Heart right ventricle (tissue), 16 donors: ENCODE measurements at regions of chr5 and their contacts with region 1.

Region 1: GRCh38 chr5:176573564-176574296 is 24.6 kb downstream of the CDHR2 start:
- DNase-seq: peak; percentile 62 to 78
- ATAC-seq: peak; percentile 76 to 91 (median 90)
- H3K4me3 ChIP-seq: no peak overlapping the region
- H3K27ac ChIP-seq: no peak overlapping the region
- H3K4me1 ChIP-seq: peaks cover 0 to 3% (median 0%) of the 10 kb centered on the region in 9 donors
- H3K27me3 ChIP-seq: peaks cover 0 to 33% (median 5%) of the 10 kb centered on the region in 7 donors
- CTCF ChIP-seq: peak; percentile 63 to 88 (median 82)

Region 2: GRCh38 chr5:176388444-176389134 is 185.1 kb before region 1 on chr5 and contains the starts of genes HIGD2A and NOP16:
- intact Hi-C with region 1: no loop called
- DNase-seq: peak; percentile 99 to 100
- ATAC-seq: peak; percentile 94 to 98 (median 96)
- H3K4me3 ChIP-seq: peak within 1 kb of the TSS; percentile 52 to 99 (median 78)
- H3K27ac ChIP-seq: peak within 1 kb of the TSS; percentile 91 to 99 (median 95)
- H3K4me1 ChIP-seq: peaks cover 6 to 39% (median 27%) of the 10 kb centered on the region in 9 donors
- H3K27me3 ChIP-seq: no peaks in the 10 kb centered on the region
- CTCF ChIP-seq: no peak
- total RNA-seq, gene HIGD2A: 198 to 276 (median 228) TPM
- total RNA-seq, gene NOP16: 11.3 to 25.9 (median 18.5) TPM

Region 3: DNA sequence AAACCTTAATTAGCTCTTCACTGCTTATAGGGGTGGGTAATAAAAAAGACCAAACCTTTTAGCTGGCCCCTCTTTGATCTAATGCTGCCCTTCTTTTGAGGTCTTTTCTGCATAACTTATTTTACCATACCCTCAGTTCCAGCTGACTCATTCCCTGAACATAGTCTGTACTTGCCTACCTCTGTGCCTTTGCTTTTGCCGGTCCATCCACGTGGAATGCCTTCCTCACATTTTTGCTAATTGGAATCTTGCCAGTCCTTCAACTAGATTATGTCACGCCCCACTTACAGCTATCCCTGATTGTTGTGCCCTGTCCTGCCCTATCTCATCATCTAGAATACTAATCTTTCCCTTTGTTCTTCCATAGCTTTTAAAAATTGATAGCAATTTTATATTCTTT is 81.3 kb before region 1 on chr5:
- intact Hi-C with region 1: no loop called
- DNase-seq: no peak
- ATAC-seq: no peak
- H3K4me3 ChIP-seq: no peak overlapping the region
- H3K27ac ChIP-seq: no peak overlapping the region
- H3K4me1 ChIP-seq: peaks cover 0 to 5% (median 0%) of the 10 kb centered on the region in 9 donors
- H3K27me3 ChIP-seq: no peaks in the 10 kb centered on the region
- CTCF ChIP-seq: no peak

Region 4: DNA sequence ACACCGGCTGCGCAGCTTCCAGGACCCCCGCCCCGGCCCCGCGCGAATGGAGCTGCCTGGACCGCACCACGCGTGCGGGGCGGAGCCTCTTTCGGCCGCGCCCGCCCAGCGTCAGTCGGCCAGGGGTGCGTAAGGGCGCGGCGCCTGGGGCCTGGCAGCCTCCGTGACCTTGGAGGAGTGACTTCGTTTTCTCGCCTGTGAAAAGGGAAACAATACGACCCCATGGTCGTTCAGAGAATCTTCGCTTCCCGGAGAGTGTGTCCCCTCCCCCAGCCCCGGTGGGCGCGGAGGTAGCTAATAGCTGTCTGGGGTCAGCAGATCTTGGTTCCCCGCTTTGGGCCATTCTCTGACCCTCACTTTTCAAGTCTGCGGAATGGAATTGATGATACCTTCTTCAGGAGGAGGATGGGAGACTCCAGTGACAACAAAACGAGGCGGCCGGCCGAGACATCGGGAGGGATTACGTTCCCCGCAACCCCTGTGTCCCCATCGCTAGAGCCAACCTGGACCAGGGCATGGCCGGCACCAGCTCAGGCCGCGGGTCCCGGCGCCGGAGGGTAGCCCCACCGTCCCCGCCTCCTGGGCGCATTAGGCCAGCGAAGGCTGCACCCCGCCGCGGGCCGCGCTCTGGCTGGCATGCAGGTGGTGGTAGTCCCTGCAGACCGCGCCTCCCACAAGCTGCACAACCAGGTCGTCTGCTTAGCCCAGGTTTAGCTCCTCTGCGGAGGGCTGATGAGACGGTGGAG is 30.1 kb before region 1 on chr5:
- intact Hi-C with region 1: no loop called
- DNase-seq: peak; percentile 71 to 82
- ATAC-seq: peak; percentile 83 to 94 (median 89)
- H3K4me3 ChIP-seq: peak overlapping the region; percentile 55 to 85 (median 71)
- H3K27ac ChIP-seq: peak overlapping the region; percentile 73 to 94 (median 90)
- H3K4me1 ChIP-seq: peaks cover 0 to 55% (median 30%) of the 10 kb centered on the region in 9 donors
- H3K27me3 ChIP-seq: no peaks in the 10 kb centered on the region
- CTCF ChIP-seq: no peak

Region 5: DNA sequence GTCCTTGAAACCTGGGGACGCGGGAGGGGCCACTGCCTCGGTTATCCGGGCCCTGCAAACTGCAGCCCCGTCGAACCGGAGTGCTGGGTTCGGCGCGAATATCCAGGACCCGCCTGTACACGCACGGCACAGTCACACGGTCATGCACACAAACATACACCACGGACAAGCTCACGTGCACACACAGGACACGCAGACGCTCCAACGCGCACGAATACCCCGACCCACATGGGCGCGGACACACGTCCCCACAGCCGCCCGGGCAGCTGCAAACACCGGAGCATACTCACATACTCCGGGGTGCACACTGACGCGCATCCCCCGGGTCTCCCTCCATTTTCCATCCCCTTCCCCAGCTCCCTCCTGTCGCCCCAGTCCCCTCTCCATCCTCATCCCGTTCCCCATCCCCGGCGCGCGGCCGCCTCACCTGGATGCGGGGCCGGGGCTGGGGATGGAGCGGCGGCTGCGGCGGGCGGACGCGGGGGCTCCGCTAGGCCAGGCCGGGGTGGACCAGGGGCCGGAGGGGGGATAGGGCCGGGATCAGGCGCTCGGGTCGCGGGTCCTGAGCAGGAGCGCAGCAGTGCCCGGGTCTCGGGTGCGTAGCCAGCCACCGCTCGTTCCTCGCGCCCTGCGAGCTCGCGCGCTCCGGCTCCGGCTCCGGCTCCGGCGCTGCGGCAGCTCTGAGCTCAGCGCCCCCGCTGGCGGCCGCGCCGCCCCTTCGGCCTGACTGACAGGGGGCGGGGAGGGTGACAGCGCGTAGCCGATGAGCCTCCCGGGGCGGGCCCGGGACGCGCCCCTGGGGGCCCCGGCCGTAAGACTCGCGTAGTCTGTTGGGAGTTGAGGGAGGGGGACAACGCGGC is 56.4 kb after region 1 on chr5 and contains the starts of genes EIF4E1B and SNCB:
- intact Hi-C with region 1: loop called in 2 of 10 experiments (anchors 5 to 10 kb)
- DNase-seq: peak; percentile 29 to 39
- ATAC-seq: peak; percentile 75 to 85 (median 82)
- H3K4me3 ChIP-seq: peak within 1 kb of the TSS in 9 of 10 donors; percentile 25 to 52 (median 45)
- H3K27ac ChIP-seq: no peak within 1 kb of the TSS
- H3K4me1 ChIP-seq: peaks cover 7 to 18% (median 13%) of the 10 kb centered on the region in 9 donors
- H3K27me3 ChIP-seq: peaks cover 10 to 99% (median 95%) of the 10 kb centered on the region in 7 donors
- CTCF ChIP-seq: peak in 1 of 9 donors; percentile 19
- total RNA-seq, gene EIF4E1B: not detected
- total RNA-seq, gene SNCB: 0.35 to 0.39 TPM in 2 of 10 donors, not detected in the others

Region 6: DNA sequence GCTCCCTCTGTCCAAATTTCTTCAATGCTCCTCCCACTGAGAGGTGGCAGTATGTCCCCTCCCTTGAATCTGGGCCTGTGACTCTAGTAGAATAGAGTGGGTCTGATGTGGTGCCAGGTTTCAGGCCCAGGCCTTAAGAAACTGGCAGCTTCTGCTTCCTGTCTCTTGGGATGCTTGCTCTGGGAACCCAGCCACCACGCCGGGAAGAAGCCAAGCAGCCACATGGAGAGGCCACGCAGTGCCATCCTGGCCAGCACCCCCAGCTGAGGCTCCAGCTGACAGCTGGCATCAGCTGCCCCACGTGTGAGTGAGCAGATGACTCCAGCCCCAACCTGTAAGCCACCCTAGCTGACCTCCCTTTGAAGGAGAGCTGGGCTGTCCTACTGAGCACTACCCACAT is 66.3 kb after region 1 on chr5:
- intact Hi-C with region 1: loop called in 6 of 10 experiments (anchors 5 to 10 kb)
- DNase-seq: peak; percentile 68 to 77
- ATAC-seq: peak; percentile 80 to 94 (median 90)
- H3K4me3 ChIP-seq: no peak overlapping the region
- H3K27ac ChIP-seq: peak overlapping the region in 1 of 10 donors; percentile 58
- H3K4me1 ChIP-seq: peaks cover 0 to 7% (median 0%) of the 10 kb centered on the region in 9 donors
- H3K27me3 ChIP-seq: peaks cover 0 to 13% (median 5%) of the 10 kb centered on the region in 7 donors
- CTCF ChIP-seq: no peak

Region 7: GRCh38 chr5:176647030-176647866 is 73.5 kb after region 1 on chr5 and contains the start of gene TSPAN17:
- intact Hi-C with region 1: loop called in 6 of 10 experiments (anchors 2 to 10 kb)
- DNase-seq: peak; percentile 100
- ATAC-seq: peak; percentile 97 to 99 (median 98)
- H3K4me3 ChIP-seq: peak within 1 kb of the TSS; percentile 51 to 90 (median 79)
- H3K27ac ChIP-seq: peak within 1 kb of the TSS; percentile 25 to 92 (median 80)
- H3K4me1 ChIP-seq: peaks cover 10 to 29% (median 20%) of the 10 kb centered on the region in 9 donors
- H3K27me3 ChIP-seq: no peaks in the 10 kb centered on the region
- CTCF ChIP-seq: peak in 7 of 9 donors; percentile 29 to 70 (median 40)
- total RNA-seq, gene TSPAN17: 20.8 to 48.3 (median 27.3) TPM